ENCODE measurements at regions of chr2 and their contacts with region 1.

Region 1: DNA sequence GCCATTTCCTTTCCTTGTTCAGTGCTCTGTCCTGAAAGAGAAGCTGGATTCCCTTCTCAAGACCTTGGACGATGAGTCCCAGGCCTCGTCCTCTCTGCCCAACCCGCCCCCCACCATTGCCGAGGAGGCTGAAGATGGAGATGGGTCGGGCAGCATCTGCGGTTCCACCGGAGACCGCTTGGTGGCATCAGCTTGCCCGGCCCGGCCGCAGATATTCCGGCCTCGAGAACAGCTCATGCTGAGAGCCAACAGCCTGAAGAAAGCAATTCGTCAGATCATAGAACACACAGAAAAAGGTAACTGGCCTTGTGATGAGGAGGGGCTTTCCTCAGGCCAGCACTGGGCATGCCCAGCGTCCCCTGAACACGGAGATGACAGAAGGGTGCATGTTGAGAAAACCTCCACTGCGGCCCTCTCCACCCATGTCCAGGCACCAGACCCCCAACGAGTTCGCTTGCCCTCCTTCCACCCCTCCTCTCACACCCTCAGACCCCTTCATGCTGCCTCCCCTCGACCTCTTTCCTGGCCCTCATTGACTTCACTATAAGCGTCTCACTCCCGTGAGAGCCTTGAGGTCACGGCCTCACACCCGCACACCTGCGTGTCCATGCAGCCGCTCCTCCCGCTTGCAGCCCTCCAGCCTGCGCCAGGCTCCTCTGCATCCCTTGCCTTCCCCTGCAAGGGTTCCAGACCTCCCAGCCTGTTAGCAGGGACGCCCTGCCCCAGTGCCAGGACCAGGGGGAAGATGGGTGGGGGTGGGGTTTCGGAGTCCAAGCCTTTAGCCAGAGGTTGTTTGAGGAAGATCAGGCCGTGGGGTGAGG is 95.0 kb downstream of the DGKD start:
- DNase-seq: peak; percentile 69
- H3K27ac ChIP-seq: peak overlapping the region; percentile 34
- CTCF ChIP-seq: peak; percentile 88

Region 2: DNA sequence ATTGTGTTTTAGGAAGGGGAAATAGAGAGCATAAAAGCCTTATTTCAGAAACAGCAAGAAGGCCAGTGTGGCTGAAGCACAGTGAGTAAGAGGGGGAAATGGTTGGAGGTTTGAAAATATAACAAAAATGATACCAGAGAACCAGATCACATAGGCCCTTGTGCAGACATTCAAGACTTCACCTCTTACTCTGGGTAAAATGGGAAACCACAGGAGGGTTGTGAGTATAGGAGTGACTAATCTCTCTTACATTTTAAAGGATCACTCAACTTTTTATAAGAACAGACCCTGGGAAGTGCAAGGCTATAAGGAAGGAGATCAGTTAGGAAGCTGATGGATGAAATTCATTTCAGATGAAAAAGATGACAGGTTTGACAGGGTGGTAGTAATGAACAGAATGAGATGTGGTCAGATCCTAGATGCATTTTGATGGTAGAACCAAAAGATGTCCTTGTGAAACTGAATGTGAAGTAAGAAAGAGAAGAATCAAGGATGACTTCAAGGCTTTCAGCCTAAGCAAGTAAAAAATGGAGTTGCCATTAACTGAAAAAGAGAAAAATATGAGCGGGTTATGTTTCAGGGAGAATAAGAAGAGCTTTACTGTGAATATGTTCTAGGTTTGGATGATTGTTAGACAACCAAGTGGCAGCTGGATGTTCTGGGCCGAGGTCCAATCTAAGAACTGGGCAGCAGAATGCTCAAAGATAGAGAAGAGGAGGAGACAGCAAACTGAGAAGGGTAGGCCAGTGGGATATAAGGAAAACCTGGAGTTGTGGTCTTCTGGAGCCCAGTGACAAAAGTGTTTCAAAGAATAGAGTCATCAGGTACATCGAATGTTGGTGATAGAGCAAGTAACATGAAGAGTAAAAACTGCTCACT is 52.1 kb after region 1 on chr2:
- CTCF ChIA-PET with region 1: no interaction called
- POLR2A ChIA-PET with region 1: no interaction called
- DNase-seq: no peak
- H3K27ac ChIP-seq: no peak overlapping the region
- CTCF ChIP-seq: no peak

Region 3: DNA sequence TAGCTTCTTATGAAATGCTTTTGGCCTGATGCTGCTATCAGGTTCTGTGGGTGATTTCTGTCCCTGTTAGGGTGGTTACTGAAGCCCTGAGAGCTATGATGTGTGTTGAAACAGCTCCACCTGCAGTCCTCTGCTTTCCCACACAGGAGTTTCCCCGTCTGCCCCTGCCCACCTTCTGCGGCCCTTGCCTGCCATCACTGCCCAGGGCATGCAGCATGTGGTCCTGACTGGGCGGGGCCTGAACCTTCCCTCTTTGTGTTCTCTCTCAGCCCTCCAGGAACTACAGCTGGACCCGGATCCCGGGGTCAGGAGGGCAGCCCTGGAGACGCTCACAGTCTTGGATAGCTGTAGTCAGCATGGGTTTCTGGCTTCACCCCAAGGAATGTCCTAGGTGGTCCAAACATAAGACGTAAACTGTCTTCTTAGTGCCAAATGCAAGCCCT is 383.6 kb after region 1 on chr2:
- CTCF ChIA-PET with region 1: interaction called, 22 read pairs
- POLR2A ChIA-PET with region 1: no interaction called
- DNase-seq: peak; percentile 73
- H3K27ac ChIP-seq: peak overlapping the region; percentile 67
- CTCF ChIP-seq: peak; percentile 33; the same call in 1 of the 2 replicates

Region 4: DNA sequence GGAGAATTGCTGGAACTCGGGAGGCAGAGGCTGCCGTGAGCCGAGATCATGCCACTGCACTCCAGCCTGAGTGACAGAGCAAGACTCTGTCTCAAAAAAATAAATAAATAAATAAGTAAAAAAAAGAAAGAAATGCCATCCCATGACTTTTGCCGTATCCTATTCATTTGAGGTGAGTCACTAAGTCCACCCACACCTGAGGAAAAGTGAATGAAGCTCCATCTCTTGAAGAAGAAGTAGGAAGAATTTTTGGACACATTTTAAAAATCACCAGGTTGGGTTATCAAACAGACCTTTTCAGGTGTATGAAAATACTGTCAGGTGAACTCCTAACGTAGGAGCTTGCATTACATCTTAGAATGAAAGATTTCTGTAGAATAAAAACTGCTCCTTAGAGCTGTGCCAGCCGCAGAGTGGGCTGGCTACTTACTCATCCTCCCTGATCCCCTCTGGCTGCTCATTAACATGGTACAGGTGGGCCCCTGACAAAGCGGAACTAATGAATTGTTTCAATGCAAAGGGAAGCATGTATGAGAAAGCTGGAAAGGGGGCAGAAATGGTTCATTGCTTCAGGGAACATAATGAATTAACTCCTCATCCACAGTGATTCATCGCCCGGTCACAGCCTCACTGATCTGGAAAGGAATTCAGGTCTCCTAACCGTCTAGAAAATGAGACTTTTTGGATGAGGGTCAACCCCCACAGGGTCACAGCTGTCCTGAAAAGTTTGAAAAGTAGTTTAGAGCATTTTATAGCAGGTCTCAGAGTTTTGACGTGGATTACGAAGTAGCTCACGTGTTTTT is 792.6 kb after region 1 on chr2:
- CTCF ChIA-PET with region 1: no interaction called
- POLR2A ChIA-PET with region 1: no interaction called
- DNase-seq: peak; percentile 84
- H3K27ac ChIP-seq: peak overlapping the region; percentile 87
- CTCF ChIP-seq: no peak